CD4-positive, alpha-beta memory T cell (primary cell): ENCODE measurements at regions of chr12 and their contacts with region 1.

Region 1: GRCh38 chr12:68074306-68075027 is 85.1 kb downstream of the IFNG start:
- DNase-seq: no peak
- H3K4me3 ChIP-seq: no peak overlapping the region
- H3K4me3 Mint-ChIP-seq: no peak overlapping the region
- H3K27ac ChIP-seq: no peak overlapping the region
- H3K27ac Mint-ChIP-seq: no peak overlapping the region
- H3K4me1 ChIP-seq: no peaks in the 10 kb centered on the region
- H3K4me1 Mint-ChIP-seq: peaks cover 0 to 14% (median 6%) of the 10 kb centered on the region in 4 donors
- H3K27me3 ChIP-seq: no peaks in the 10 kb centered on the region
- H3K27me3 Mint-ChIP-seq: no peaks in the 10 kb centered on the region

Region 2: DNA sequence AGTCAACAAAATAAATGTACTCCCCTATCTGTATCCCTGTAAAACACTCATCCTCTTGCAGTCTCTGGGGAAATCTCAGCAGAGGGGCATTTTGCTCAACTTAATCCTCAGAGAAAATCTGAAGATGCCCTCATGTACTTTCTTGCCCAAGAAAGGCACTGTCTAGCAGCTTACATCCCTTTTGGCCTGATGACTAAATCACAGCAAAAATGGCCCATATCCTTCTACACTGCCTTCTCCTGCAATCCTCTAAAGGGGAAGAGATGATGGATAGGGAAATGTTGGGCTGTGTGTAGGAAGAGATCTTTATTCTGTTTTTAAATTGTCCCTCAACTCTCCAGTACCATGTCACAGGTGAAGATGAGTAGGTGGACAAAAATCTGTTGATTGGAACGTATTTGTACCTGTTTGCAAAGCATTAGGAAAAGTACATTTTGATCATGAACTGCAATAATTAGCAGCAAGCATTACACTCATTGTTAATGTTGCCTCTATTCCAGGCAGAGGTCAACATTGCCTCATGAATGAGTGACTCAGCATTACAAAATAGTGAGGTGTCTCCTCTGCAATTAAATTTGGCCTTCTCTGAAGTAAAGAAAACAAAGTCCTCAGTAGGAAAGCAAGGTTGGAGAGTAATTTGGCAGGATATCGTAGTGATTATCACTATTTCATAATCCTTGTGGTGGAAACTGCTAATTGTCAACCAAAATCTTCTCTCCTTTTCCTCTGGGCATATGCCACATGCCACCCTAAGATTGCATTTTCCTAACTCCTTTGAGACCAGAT is 977.7 kb before region 1 on chr12:
- CTCF ChIA-PET with region 1: no interaction called
- POLR2A ChIA-PET with region 1: no interaction called
- intact Hi-C with region 1: loop called (anchors 5 kb)
- DNase-seq: no peak
- H3K4me3 ChIP-seq: no peak overlapping the region
- H3K4me3 Mint-ChIP-seq: no peak overlapping the region
- H3K27ac ChIP-seq: no peak overlapping the region
- H3K27ac Mint-ChIP-seq: peak overlapping the region in 1 of 7 donors; percentile 4
- H3K4me1 ChIP-seq: no peaks in the 10 kb centered on the region
- H3K4me1 Mint-ChIP-seq: no peaks in the 10 kb centered on the region
- H3K27me3 ChIP-seq: no peaks in the 10 kb centered on the region
- H3K27me3 Mint-ChIP-seq: peaks cover 8 to 9% of the 10 kb centered on the region in 2 donors

Region 3: GRCh38 chr12:67893022-67893580 is 181.4 kb before region 1 on chr12:
- CTCF ChIA-PET with region 1: no interaction called
- POLR2A ChIA-PET with region 1: no interaction called
- intact Hi-C with region 1: no loop called
- DNase-seq: no peak
- H3K4me3 ChIP-seq: no peak overlapping the region
- H3K4me3 Mint-ChIP-seq: no peak overlapping the region
- H3K27ac ChIP-seq: no peak overlapping the region
- H3K27ac Mint-ChIP-seq: no peak overlapping the region
- H3K4me1 ChIP-seq: no peaks in the 10 kb centered on the region
- H3K4me1 Mint-ChIP-seq: peaks cover 0 to 10% (median 8%) of the 10 kb centered on the region in 4 donors
- H3K27me3 ChIP-seq: no peaks in the 10 kb centered on the region
- H3K27me3 Mint-ChIP-seq: peaks cover 2 to 3% of the 10 kb centered on the region in 2 donors